ENCODE measurements at regions of chr21 and their contacts with region 1.

Region 1: GRCh38 chr21:36028127-36029069 is 31.9 kb downstream of the SETD4 start:
- DNase-seq: peak; percentile 39 to 73 (median 62)
- ATAC-seq: peak; percentile 87
- H3K4me3 ChIP-seq: no peak overlapping the region
- H3K4me3 Mint-ChIP-seq: peak overlapping the region in 2 of 10 donors; percentile 22 to 25
- H3K27ac ChIP-seq: no peak overlapping the region
- H3K27ac Mint-ChIP-seq: no peak overlapping the region
- H3K4me1 ChIP-seq: peaks cover 0 to 4% of the 10 kb centered on the region in 2 donors
- H3K4me1 Mint-ChIP-seq: peaks cover 4 to 10% (median 5%) of the 10 kb centered on the region in 7 donors
- H3K27me3 ChIP-seq: no peaks in the 10 kb centered on the region
- H3K27me3 Mint-ChIP-seq: no peaks in the 10 kb centered on the region

Region 2: GRCh38 chr21:34693192-34693810 is 1335.1 kb before region 1 on chr21:
- CTCF ChIA-PET with region 1: interaction called, 7 read pairs
- POLR2A ChIA-PET with region 1: no interaction called
- intact Hi-C with region 1: loop called (anchors 1 to 2 kb)
- DNase-seq: peak in 7 of 9 donors; percentile 33 to 63 (median 58)
- ATAC-seq: peak; percentile 72
- H3K4me3 ChIP-seq: no peak overlapping the region
- H3K4me3 Mint-ChIP-seq: no peak overlapping the region
- H3K27ac ChIP-seq: no peak overlapping the region
- H3K27ac Mint-ChIP-seq: no peak overlapping the region
- H3K4me1 ChIP-seq: no peaks in the 10 kb centered on the region
- H3K4me1 Mint-ChIP-seq: peaks cover 0 to 10% (median 3%) of the 10 kb centered on the region in 7 donors
- H3K27me3 ChIP-seq: peaks cover 0 to 4% of the 10 kb centered on the region in 2 donors
- H3K27me3 Mint-ChIP-seq: peaks cover 2 to 43% (median 10%) of the 10 kb centered on the region in 5 donors

Region 3: GRCh38 chr21:34745557-34746255 is 1282.7 kb before region 1 on chr21:
- CTCF ChIA-PET with region 1: interaction called, 5 read pairs
- POLR2A ChIA-PET with region 1: no interaction called
- intact Hi-C with region 1: loop called (anchors 1 kb)
- DNase-seq: peak; percentile 27 to 65 (median 49)
- ATAC-seq: peak; percentile 92
- H3K4me3 ChIP-seq: no peak overlapping the region
- H3K4me3 Mint-ChIP-seq: peak overlapping the region; percentile 25 to 75 (median 60)
- H3K27ac ChIP-seq: no peak overlapping the region
- H3K27ac Mint-ChIP-seq: no peak overlapping the region
- H3K4me1 ChIP-seq: no peaks in the 10 kb centered on the region
- H3K4me1 Mint-ChIP-seq: peaks cover 0 to 5% (median 4%) of the 10 kb centered on the region in 7 donors
- H3K27me3 ChIP-seq: no peaks in the 10 kb centered on the region
- H3K27me3 Mint-ChIP-seq: peaks cover 0 to 19% (median 4%) of the 10 kb centered on the region in 5 donors

Region 4: GRCh38 chr21:35840197-35840799 is 188.1 kb before region 1 on chr21:
- CTCF ChIA-PET with region 1: no interaction called
- POLR2A ChIA-PET with region 1: no interaction called
- intact Hi-C with region 1: loop called (anchors 1 kb)
- DNase-seq: peak in 7 of 9 donors; percentile 30 to 69 (median 52)
- ATAC-seq: peak; percentile 69
- H3K4me3 ChIP-seq: no peak overlapping the region
- H3K4me3 Mint-ChIP-seq: no peak overlapping the region
- H3K27ac ChIP-seq: no peak overlapping the region
- H3K27ac Mint-ChIP-seq: no peak overlapping the region
- H3K4me1 ChIP-seq: peaks cover 0 to 4% of the 10 kb centered on the region in 2 donors
- H3K4me1 Mint-ChIP-seq: peaks cover 0 to 18% (median 5%) of the 10 kb centered on the region in 7 donors
- H3K27me3 ChIP-seq: no peaks in the 10 kb centered on the region
- H3K27me3 Mint-ChIP-seq: peaks cover 0 to 6% (median 0%) of the 10 kb centered on the region in 5 donors

Region 5: GRCh38 chr21:36044056-36044455 is 15.7 kb after region 1 on chr21:
- CTCF ChIA-PET with region 1: interaction called, 10 read pairs
- POLR2A ChIA-PET with region 1: no interaction called
- intact Hi-C with region 1: no loop called
- DNase-seq: no peak
- ATAC-seq: no peak
- H3K4me3 ChIP-seq: no peak overlapping the region
- H3K4me3 Mint-ChIP-seq: no peak overlapping the region
- H3K27ac ChIP-seq: no peak overlapping the region
- H3K27ac Mint-ChIP-seq: no peak overlapping the region
- H3K4me1 ChIP-seq: no peaks in the 10 kb centered on the region
- H3K4me1 Mint-ChIP-seq: peaks cover 0 to 5% (median 2%) of the 10 kb centered on the region in 7 donors
- H3K27me3 ChIP-seq: no peaks in the 10 kb centered on the region
- H3K27me3 Mint-ChIP-seq: no peaks in the 10 kb centered on the region